GM13977 (cell line): ENCODE measurements at regions of chr2 and their contacts with region 1.

Region 1: GRCh38 chr2:46632349-46632748 is 153.0 kb downstream of the TMEM247 start:
- DNase-seq: peak; percentile 13
- CTCF ChIP-seq: peak; percentile 43

Region 2: DNA sequence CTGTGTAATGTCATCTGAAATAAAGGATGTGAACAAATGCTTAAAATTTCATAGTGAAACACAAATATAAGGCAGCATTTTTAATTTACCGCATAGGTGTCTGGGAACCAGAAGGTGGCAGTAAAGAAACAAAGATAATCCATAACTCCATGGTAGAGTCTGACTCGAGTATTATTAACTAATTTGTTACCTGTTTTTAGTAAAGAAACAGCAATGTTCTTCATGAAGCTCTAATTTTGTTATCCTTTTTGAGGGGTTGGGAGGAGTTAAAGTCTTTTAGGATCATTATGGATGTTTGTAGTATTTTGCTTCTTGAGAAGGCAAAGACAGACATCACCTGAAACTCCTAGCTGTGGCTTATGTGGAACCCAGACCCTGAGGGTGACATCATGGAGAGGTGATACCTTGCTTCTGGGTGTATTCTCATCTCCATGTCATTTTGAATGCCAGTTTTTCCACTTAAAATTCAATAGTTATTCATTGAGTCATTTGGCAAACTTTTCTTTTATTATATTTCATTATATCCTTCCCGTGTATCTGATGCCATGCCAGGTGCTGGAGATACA is 621.3 kb before region 1 on chr2:
- in situ Hi-C with region 1: loop called (anchors 25 kb)
- DNase-seq: peak; percentile 62
- CTCF ChIP-seq: peak; percentile 66

Region 3: DNA sequence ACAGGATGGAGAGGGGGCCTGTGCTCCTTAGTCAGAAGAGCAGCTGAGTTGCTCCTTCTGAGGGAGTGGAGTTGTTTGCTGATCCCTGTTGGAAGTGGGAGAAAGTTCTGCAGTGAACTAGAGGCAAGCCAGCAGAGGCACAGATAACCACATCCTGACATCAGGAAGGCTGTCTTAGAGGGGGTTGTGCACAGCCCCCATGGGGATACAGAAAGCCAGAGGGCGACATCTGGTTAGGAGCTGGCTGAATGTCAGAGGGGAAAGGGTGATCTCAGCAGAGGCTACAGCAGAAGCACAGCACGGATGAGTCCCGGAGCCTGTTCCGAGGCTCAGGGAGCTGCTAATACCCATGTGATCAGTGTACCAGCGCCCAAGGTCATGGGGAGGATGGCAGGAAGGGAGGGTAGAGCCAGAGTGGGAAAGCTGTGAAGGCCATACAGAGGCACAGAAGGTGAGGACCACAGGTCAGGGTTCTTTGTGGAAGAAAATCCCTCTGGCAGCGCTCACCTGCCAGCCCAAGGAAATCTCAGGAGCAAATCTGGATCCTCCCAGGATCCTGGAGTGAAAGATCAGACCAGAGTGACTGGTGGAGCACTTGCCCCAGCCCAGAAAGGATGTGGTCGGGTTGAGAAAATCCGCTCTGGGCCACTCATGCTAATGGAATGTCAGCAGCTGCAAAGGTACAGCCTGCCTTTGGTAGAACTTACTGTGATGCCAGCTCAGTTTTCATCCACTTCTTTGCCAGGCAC is 411.0 kb after region 1 on chr2:
- in situ Hi-C with region 1: no loop called
- DNase-seq: no peak
- CTCF ChIP-seq: no peak